Right ventricle myocardium inferior (tissue), 1 donor: ENCODE measurements at regions of chr7 and their contacts with region 1.

Region 1: DNA sequence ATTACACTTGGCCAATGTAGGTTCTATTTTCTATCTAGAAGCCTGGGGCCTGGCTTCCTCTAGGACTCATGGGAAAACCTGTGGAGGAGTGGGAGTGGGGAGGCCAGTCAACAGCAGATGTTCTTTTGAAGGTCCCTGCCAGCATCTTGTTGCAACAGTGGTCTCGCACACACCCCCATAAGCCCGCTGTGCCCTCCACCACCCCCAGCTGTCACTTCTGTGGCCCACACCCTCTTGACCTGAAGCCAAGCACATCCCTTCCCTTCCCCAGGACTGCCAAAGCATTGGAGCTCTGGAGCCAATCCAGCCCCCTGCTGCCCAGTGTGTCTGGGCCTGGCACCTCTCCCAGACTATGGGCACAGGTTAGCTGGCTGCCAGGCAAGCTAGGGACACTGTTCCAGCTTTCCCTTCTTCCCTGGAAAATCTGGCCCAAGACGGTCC is 1.9 kb upstream of the STX1A start:
- DNase-seq: peak; percentile 80
- ATAC-seq: peak; percentile 70

Region 2: GRCh38 chr7:73468097-73468496 is 253.3 kb before region 1 on chr7:
- intact Hi-C with region 1: no loop called
- DNase-seq: no peak
- ATAC-seq: no peak

Region 3: GRCh38 chr7:73606801-73607691 is 114.4 kb before region 1 on chr7:
- intact Hi-C with region 1: loop called (anchors 1 kb)
- DNase-seq: peak; percentile 86
- ATAC-seq: peak; percentile 49

Region 4: GRCh38 chr7:73667344-73668102 is 53.9 kb before region 1 on chr7 and contains the start of gene VPS37D:
- intact Hi-C with region 1: loop called (anchors 5 kb)
- DNase-seq: peak; percentile 96
- ATAC-seq: peak; percentile 97
- total RNA-seq, gene VPS37D: 3.0 TPM

Region 5: DNA sequence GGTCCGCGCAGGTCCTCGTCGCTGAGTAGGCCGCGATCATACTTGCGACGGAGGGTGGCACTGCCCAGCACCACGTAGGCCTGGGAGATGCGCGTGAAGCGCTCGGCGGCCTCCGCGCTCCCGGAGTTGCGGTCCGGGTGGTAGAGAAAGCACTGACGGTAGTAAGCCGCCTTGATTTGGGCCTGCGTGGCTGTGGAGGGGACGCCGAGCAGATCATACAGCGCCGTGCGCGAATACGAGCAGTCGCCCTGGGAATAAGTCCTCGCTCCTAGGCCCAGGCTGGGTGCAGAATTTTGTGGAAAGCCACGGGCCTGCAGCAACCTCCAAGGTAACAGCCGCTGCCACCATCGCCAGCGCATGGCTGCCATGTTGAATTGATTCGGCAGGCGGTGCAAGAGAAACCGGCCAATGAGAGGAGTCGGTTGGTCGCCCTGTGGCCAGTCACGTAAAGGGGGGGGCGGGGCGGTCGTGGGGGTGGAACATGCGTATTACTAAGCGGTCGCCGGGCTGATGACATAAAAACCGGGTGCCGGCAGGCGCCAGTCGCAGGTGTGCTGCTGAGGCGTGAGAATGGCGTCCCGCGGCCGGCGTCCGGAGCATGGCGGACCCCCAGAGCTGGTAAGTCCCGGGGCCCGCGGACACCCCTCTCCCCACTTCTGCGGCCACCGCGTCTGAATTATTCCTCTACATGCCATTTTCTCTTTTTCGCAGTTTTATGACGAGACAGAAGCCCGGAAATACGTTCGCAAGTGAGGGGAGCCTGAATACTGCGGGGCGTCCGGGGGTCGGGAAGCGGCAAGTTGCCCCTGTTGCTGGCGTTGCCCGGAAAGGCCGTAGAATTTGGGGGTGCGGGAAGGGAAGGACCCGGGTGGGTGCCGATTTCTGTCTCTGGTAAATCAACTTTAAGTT is 38.1 kb before region 1 on chr7 and contains the starts of genes BUD23 and DNAJC30:
- intact Hi-C with region 1: loop called (anchors 1 kb)
- DNase-seq: peak; percentile 98
- ATAC-seq: peak; percentile 97
- total RNA-seq, gene BUD23: 81.1 TPM
- total RNA-seq, gene DNAJC30: 13.8 TPM

Region 6: GRCh38 chr7:73799267-73800141 is 78.1 kb after region 1 on chr7:
- intact Hi-C with region 1: no loop called
- DNase-seq: no peak
- ATAC-seq: no peak

Region 7: GRCh38 chr7:74306730-74307469 is 585.5 kb after region 1 on chr7:
- intact Hi-C with region 1: no loop called
- DNase-seq: no peak
- ATAC-seq: peak; percentile 81